ENCODE measurements at regions of chr2 and their contacts with region 1.

Region 1: GRCh38 chr2:47767880-47768609 is 14.9 kb upstream of the MSH6 start:
- DNase-seq: peak; percentile 76
- ATAC-seq: peak; percentile 94
- H3K4me3 Mint-ChIP-seq: no peak overlapping the region
- H3K27ac Mint-ChIP-seq: no peak overlapping the region
- H3K4me1 Mint-ChIP-seq: peaks cover 11% of the 10 kb centered on the region
- H3K27me3 Mint-ChIP-seq: peaks cover 3% of the 10 kb centered on the region

Region 2: DNA sequence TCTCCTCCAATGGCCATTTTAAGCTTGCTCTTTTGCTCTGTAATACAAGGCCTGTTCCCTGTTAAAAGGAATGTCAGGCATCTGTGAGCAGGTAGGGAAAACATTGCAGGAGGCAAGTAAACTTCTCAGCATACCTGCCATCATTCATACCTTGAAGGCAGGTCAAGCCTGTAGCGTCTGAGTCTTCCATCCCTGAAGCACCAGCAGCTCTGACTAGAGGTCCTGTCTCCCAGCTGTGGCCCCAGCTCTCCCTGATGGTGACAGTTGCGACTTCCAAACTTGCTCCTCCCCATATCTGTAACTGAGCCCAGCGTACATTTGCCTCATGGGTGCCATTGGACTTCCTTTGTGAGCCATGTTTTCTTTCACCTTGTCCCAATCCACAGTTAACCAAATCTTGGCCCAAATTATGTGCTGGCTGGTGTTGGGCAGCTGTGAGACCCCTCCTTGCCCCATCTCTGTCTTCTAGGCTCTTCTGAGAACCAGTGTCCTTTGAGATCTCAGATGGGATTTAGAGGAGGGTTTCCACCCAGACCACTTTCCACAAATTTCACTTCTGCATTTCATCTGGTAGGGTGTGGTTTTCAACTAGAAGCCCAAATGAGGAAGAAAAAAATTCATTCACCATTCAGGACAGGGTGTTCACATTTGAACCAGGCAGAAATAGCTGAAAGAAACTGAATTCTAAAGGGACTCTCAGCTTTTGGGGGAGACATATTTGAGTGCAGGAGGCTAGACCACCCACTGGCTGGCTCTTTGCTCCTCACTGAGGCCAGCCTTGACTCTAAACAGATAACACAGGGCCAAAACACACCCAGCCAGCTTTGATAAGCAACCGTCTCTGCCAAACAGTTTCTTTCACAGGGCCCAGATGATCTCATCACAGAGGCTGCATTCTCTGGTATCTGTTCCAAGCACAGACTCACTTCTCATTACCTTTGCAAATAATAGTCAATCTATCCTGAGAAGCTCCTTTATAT is 431.5 kb before region 1 on chr2:
- CTCF ChIA-PET with region 1: interaction called, 62 read pairs
- DNase-seq: no peak
- ATAC-seq: no peak
- H3K4me3 Mint-ChIP-seq: no peak overlapping the region
- H3K27ac Mint-ChIP-seq: no peak overlapping the region
- H3K4me1 Mint-ChIP-seq: no peaks in the 10 kb centered on the region
- H3K27me3 Mint-ChIP-seq: peaks cover 15% of the 10 kb centered on the region

Region 3: GRCh38 chr2:47386551-47386950 is 381.5 kb before region 1 on chr2:
- CTCF ChIA-PET with region 1: interaction called, 15 read pairs
- DNase-seq: no peak
- ATAC-seq: no peak
- H3K4me3 Mint-ChIP-seq: no peak overlapping the region
- H3K27ac Mint-ChIP-seq: no peak overlapping the region
- H3K4me1 Mint-ChIP-seq: peaks cover 3% of the 10 kb centered on the region
- H3K27me3 Mint-ChIP-seq: peaks cover 13% of the 10 kb centered on the region

Region 4: GRCh38 chr2:47437287-47437686 is 330.8 kb before region 1 on chr2:
- CTCF ChIA-PET with region 1: interaction called, 19 read pairs
- DNase-seq: no peak
- ATAC-seq: no peak
- H3K4me3 Mint-ChIP-seq: no peak overlapping the region
- H3K27ac Mint-ChIP-seq: no peak overlapping the region
- H3K4me1 Mint-ChIP-seq: no peaks in the 10 kb centered on the region
- H3K27me3 Mint-ChIP-seq: no peaks in the 10 kb centered on the region

Region 5: DNA sequence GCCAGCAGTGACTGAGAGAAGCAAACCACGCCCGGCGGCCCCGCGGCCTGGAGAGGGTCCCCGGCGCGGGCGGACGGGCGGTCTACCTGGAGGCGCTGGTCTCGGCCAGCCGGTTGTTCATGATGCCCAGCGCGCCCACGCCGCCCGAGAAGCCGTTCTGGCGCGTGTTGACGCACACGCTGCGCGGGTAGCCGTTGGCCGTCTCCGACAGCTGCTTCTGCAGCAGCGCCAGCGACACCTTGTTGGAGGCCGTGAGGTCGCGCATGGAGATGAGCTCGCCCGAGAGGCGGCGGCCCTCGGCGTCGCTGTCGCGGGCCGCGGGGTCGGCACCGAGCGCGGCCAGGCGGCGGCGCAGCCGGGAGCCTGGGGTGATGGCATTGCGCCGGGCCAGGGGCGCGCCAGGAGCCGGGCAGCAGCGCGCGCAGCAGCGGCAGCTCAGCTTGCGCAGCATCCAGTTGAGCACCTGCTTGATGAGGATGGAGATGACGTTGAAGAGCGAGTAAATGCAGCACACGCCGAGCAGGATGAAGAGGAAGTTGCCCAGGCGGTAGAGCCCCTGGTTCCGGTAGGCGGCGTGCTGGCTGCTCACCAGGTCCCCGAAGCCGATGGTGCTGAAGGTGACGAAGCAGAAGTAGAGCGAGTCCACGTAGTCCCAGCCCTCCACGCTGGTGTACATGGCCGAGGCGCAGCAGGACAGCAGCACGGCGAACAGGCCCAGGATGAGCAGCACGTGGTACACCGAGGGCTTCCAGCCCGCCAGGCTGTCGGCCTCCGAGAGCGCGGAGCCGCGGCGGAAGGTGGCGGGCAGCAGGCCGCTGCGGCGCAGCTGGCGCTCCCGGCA is 247.0 kb before region 1 on chr2:
- CTCF ChIA-PET with region 1: interaction called, 15 read pairs
- DNase-seq: peak; percentile 89
- ATAC-seq: peak; percentile 87
- H3K4me3 Mint-ChIP-seq: peak overlapping the region; percentile 87
- H3K27ac Mint-ChIP-seq: peak overlapping the region; percentile 94
- H3K4me1 Mint-ChIP-seq: peaks cover 28% of the 10 kb centered on the region
- H3K27me3 Mint-ChIP-seq: no peaks in the 10 kb centered on the region

Region 6: GRCh38 chr2:47751875-47752357 is 16.1 kb before region 1 on chr2:
- CTCF ChIA-PET with region 1: interaction called, 12 read pairs
- DNase-seq: no peak
- ATAC-seq: peak; percentile 38
- H3K4me3 Mint-ChIP-seq: peak overlapping the region; percentile 47
- H3K27ac Mint-ChIP-seq: peak overlapping the region; percentile 88
- H3K4me1 Mint-ChIP-seq: peaks cover 12% of the 10 kb centered on the region
- H3K27me3 Mint-ChIP-seq: peaks cover 1% of the 10 kb centered on the region

Region 7: GRCh38 chr2:47782671-47783485 is 14.8 kb after region 1 on chr2 and contains the start of gene MSH6:
- CTCF ChIA-PET with region 1: interaction called, 19 read pairs
- DNase-seq: peak; percentile 89
- ATAC-seq: peak; percentile 92
- H3K4me3 Mint-ChIP-seq: peak within 1 kb of the TSS; percentile 85
- H3K27ac Mint-ChIP-seq: peak within 1 kb of the TSS; percentile 87
- H3K4me1 Mint-ChIP-seq: peaks cover 26% of the 10 kb centered on the region
- H3K27me3 Mint-ChIP-seq: no peaks in the 10 kb centered on the region
- total RNA-seq, gene MSH6: 93.8 to 103 TPM